Stomach (tissue), 19 donors: ENCODE measurements at regions of chr16 and their contacts with region 1.

Region 1: GRCh38 chr16:9647981-9648712 is 534.1 kb downstream of the GRIN2A start:
- DNase-seq: peak in 1 of 2 donors; percentile 68
- H3K4me3 ChIP-seq: no peak overlapping the region
- H3K27ac ChIP-seq: no peak overlapping the region
- H3K4me1 ChIP-seq: peaks cover 0 to 6% (median 0%) of the 10 kb centered on the region in 4 donors
- H3K27me3 ChIP-seq: no peaks in the 10 kb centered on the region
- CTCF ChIP-seq: peak in 5 of 7 experiments; percentile 27 to 64 (median 59)
- EP300 ChIP-seq: no peak
- POLR2A ChIP-seq: no peak

Region 2: DNA sequence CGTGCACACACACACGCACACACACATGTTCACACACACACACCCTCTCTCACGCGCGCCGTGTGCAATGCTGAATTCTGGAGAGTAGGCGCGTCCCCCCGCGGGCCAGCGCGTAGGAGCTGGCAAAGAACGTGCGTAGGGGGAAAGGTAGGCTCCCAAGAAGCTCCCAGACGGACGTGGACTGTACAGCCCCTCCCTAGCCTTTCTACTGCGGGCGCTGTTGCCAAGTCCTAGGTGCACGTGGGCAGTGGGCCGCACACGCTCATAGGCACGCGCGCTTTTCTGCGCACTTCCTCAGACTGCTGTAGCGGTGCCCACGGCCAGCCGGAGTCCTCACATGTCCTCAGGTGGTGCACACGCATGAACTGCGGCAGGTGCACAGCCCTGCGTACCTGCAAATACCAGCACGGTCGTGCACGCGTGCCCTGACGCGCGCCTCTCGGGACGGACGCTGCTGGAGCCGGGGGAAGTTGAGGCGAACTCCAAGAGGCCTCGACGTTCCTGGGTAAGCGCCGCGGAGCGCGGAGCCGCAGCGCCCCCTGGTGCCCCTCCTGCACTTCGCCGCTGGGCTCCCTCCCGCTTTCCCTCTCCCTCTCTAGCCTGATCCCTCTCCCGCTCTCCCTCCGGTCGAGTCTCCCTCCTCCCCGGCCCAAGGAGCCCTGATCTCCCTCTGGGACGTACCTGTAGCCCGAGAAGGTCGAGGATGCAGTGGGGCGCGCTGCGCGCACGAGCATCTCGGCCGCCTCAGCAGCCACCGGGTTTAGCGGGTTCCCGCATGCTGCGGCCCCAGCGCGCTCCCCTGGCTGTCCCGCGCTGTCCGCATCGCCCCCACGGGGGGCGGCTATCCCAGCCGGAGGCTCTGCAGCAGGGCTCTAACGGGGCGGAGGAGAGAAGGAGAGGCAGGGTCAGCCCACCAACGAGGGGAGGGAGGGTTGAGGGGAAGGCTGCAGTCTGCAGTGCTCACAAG is 533.3 kb after region 1 on chr16:
- intact Hi-C with region 1: loop called (anchors 10 kb)
- DNase-seq: peak; percentile 71 to 91
- H3K4me3 ChIP-seq: peak overlapping the region; percentile 41 to 49 (median 44)
- H3K27ac ChIP-seq: peak overlapping the region in 2 of 5 donors; percentile 44 to 65
- H3K4me1 ChIP-seq: peaks cover 13 to 36% (median 34%) of the 10 kb centered on the region in 4 donors
- H3K27me3 ChIP-seq: peaks cover 0 to 58% (median 33%) of the 10 kb centered on the region in 3 donors
- CTCF ChIP-seq: peak in 5 of 7 experiments; percentile 84 to 90 (median 85)
- EP300 ChIP-seq: no peak
- POLR2A ChIP-seq: no peak